Heart left ventricle (tissue), 16 donors: ENCODE measurements at regions of chr12 and their contacts with region 1.

Region 1: GRCh38 chr12:104890476-104891096 is 67.5 kb downstream of the SLC41A2 start:
- DNase-seq: no peak
- ATAC-seq: no peak
- H3K4me3 ChIP-seq: no peak overlapping the region
- H3K27ac ChIP-seq: no peak overlapping the region
- H3K4me1 ChIP-seq: no peaks in the 10 kb centered on the region
- H3K27me3 ChIP-seq: no peaks in the 10 kb centered on the region
- CTCF ChIP-seq: no peak
- POLR2A ChIP-seq: no peak

Region 2: DNA sequence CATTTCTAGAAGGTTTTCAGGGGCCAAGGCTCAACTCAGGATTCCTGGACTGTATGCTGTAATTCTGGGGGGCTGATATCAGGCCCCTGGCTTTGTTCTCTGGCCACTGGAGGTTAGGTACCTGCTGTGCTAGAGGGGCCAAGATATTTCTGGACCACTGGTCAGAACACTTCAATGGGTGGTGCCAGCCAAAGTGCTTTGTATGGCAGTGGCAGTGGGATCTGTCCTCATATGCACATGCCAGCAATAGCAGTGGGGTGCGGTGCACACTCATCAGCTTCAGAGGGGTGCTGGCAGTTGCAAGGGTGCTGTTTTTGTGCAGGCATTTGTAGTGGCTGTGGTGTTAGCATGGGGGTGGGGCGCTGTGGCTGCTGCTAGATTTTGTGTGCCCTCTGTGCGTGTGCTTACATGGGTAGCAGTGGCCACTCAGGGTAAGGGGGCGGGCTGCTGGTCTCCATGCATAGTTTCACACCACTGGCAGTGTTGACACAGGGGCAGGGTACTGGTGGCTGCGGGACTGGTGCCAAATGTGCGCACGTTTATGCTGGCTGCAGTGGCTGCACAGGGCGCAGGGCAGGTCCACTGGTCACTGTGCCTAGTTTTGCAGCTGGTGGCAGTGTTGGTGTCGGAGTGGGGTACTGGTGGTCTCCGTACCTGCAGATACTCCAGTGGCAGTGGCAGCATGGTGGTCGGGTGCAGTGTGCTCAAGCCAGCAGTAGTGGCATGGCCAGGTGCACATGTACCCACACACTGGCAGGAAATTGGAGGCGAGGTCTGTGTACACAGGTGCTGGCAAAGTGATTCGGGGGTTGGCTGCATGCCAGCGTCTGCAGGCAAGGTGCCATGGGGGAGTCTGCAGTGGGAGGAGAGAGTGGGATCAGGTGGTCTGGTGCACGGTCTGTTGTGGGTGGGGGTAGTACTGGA is 108.1 kb after region 1 on chr12:
- intact Hi-C with region 1: no loop called
- DNase-seq: peak in 1 of 5 donors; percentile 31
- ATAC-seq: peak in 3 of 4 donors; percentile 20 to 68 (median 43)
- H3K4me3 ChIP-seq: no peak overlapping the region
- H3K27ac ChIP-seq: peak overlapping the region in 1 of 12 donors; percentile 32
- H3K4me1 ChIP-seq: peaks cover 0 to 28% (median 0%) of the 10 kb centered on the region in 12 donors
- H3K27me3 ChIP-seq: no peaks in the 10 kb centered on the region
- CTCF ChIP-seq: no peak
- POLR2A ChIP-seq: no peak

Region 3: DNA sequence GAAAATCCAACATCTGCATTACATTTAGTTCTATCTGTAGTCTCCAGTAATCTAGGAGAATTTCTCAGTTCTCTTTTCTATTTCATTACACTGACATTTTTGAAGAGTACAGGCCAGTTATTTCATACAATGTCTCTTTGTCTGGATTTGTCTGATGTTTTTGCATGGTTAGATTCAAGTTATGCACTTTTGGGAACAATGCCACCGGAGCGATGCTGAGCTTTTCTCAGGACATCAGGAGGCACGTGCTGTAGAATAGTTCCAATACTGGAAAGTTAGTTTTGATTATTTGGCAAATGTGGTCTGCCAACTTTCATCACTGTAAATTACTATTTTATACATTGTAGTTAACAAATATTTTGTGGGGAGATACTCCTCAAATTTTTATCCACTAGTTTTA is 150.6 kb after region 1 on chr12:
- intact Hi-C with region 1: loop called in 1 of 10 experiments (anchors 10 kb)
- DNase-seq: no peak
- ATAC-seq: no peak
- H3K4me3 ChIP-seq: no peak overlapping the region
- H3K27ac ChIP-seq: no peak overlapping the region
- H3K4me1 ChIP-seq: peaks cover 0 to 8% (median 0%) of the 10 kb centered on the region in 12 donors
- H3K27me3 ChIP-seq: no peaks in the 10 kb centered on the region
- CTCF ChIP-seq: no peak
- POLR2A ChIP-seq: no peak